Right ventricle myocardium superior (tissue), 1 donor: ENCODE measurements at regions of chr5 and their contacts with region 1.

Region 1: DNA sequence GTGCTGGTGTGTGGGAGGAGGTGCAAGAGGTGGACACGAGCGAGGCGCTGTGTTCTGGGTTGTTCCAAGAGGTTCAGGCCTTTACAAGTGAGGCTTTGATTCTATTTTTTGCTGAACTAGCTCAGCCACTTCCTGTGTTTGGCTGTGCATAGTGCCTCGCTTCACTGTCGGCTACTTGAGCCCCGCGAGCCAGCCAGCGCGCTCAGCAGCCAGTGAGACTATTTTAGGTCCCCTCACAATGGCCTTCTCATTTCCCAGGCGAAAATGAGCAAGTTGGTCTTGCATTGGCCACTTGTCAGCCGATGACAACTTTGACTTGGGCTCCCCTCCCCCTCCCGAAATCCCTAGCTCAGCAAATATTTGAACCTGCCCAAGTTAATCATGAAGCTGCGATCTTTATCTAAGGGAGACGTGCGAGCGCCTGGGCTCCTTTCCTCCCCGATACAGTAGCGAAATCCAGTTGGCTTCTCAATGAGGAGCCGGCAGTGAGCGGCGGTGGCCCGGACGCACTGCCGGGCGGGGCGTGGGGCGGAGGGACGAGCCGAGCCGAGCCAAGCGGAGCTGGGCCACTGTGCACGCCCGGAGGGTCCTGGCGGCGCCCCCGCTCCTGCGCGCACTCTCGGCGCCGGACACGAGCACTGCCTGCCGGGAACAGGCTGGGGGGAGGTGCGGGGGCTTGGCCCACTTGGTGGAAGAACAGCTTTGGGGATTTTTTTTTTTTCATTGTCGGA is 72.6 kb downstream of the PIK3R1 start:
- DNase-seq: peak; percentile 85
- ATAC-seq: peak; percentile 84

Region 2: DNA sequence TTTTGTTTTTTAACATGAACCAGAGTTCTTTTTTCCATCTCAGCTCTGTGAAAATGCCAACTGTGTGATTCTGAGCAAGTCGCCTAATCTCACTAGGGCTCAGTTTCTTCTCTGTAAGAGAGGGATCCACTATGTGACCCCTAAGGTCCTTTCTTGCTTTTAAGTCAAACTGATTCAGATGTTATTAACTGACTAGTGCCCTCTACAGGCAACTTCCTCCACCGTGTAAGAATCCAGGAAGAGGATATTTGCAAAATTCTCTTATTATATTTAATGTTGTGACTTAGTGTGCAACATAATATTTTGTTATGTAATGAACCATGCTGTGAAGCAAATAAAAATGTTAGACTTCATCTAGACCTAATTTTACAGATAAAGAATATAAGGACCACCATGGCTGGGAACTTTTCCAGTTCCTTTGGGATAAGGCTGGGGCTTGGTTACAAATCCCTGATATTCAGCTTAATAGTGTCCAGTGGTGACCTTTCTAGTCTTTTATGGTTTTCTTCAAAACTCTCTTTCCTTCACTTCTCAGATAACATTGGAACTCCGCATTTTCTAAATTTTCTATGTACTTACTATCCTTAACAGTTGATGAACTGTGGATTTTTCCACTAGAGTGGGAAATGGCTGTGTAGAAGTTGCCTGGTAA is 172.1 kb after region 1 on chr5:
- intact Hi-C with region 1: loop called (anchors 5 kb)
- DNase-seq: no peak
- ATAC-seq: peak; percentile 67

Region 3: DNA sequence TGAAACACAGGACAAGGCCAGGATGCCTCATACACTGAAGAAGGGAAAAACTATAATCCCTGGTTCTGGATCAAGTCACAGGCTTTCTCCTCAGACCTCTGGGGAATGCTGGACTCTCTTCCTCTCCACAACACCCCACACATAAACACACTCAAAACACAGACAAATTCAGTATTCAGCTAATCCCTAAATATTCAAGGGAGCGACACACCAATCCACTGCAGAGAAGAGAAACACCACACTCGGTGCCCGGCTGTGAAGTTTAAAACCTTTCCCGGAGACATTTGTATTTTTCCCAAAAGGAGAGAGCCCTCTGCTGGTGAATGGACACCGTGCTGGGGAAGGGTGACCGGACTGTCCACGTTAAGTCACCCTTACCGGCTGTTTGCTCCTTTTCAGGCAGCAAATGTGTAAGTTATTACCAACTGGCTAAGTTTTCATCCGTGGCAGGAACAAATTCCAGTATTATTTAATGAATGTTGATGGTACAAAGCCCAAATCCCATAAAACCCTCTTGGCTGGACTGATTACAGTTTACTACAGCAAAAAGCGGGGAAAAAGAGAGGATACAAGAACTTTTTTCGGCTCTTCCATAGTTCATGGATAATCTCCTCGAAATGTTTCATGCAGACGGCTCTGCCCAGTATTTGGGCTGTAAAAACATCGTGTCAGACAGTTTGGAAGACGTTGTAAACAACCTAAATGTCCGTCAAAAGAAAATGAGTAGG is 674.8 kb after region 1 on chr5:
- intact Hi-C with region 1: loop called (anchors 5 kb)
- DNase-seq: peak; percentile 54
- ATAC-seq: peak; percentile 95